Posterior vena cava (tissue), 2 donors: ENCODE measurements at regions of chr18 and their contacts with region 1.

Region 1: DNA sequence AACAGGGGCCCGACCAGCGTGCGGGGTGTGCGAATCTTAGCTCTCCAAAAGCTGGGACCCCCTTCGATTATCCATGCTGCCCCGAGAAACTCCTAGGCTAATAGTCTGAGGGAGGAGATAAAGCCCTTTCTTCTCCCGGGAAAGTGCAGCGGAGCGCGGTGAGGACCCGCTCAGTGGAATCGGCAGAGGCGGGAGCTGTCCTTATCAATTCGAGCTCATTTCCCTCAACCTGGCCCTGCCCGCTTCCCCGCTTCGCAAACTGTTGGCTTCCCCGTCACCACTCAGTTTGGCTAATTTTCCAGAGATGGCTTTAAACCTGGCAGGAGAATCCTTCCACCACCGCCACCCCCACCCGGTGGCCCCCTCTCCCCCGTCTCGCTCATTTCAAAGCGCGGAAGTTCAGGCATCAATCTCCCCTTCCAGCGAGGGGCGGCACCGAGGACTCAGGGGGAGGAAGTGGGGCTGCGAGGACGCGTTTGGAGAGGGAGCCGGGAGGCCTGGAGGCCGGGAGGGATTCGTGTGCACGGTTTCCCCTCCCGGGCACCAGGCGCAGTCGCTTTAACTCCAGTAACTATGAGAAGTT is 1.6 kb downstream of the KLHL14 start:
- DNase-seq: no peak

Region 2: DNA sequence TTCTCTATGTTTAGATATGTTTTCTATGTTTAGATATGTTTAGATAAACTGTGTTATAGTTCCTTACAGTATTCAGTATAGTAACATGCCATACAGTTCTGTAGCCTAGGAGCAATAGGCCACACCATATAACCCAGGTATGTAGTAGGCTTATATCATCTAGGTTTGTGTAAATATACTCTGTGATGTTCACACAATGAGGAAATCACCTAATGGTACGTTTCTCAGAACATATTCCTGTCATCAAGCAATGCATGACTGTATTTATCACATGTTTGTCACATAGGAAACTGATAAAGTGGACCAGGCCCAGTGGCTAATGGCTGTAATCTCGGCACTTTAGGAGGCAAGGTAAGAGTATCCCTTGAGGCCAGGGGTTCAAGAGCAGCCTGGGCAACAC is 635.6 kb before region 1 on chr18:
- intact Hi-C with region 1: no loop called
- DNase-seq: no peak

Region 3: DNA sequence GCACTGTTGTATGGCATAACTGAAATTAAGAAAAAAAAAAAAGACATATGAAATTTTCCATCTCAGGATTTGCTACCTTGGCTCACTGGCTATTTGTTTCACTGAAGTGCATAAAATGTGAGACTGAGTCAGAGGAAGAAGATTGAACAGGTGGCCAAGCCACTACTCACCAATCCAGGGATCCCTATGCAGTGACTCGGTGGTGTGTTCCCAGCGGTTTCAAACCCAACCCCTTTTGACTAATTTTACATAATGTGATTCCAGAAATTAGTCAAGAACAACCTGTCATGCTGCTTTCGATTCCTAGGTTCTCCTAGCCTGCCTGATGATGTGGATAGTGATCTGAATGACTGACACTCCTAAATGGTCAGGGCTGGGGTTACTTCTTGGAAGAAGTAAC is 75.7 kb before region 1 on chr18:
- intact Hi-C with region 1: loop called in 1 of 2 experiments (anchors 10 kb)
- DNase-seq: no peak